ENCODE measurements at regions of chr14 and their contacts with region 1.

Region 1: DNA sequence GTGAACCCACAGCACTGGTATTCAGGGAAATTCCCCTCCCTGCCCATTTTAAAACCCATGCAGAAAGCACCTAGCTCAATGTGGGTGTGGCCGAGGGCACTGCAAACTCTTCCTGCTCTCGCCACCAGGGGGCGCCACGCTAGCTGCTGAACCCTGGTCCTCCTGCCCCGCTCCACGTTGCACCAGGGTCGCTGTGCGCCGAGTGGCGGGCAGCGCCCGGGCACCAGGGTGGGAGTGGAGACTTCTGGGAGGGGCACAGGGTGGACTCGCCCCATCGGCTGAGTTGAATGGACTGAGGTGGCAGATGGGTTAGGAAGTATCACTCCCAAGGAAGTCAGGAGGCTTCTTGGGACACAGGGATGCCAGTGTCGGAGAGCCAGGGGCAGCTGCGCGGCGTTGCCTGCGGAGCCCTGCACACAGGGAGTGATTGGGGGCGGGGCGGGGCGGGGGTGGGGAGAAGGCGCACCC is 48.1 kb upstream of the BCL11B start:
- DNase-seq: peak; percentile 57 to 72 (median 61)
- H3K4me3 ChIP-seq: no peak overlapping the region
- H3K4me3 Mint-ChIP-seq: no peak overlapping the region
- H3K27ac ChIP-seq: no peak overlapping the region
- H3K27ac Mint-ChIP-seq: no peak overlapping the region
- H3K4me1 ChIP-seq: peaks cover 5% of the 10 kb centered on the region
- H3K4me1 Mint-ChIP-seq: peaks cover 0 to 14% (median 3%) of the 10 kb centered on the region in 4 donors
- H3K27me3 ChIP-seq: no peaks in the 10 kb centered on the region
- H3K27me3 Mint-ChIP-seq: peaks cover under 1% of the 10 kb centered on the region in 2 donors

Region 2: DNA sequence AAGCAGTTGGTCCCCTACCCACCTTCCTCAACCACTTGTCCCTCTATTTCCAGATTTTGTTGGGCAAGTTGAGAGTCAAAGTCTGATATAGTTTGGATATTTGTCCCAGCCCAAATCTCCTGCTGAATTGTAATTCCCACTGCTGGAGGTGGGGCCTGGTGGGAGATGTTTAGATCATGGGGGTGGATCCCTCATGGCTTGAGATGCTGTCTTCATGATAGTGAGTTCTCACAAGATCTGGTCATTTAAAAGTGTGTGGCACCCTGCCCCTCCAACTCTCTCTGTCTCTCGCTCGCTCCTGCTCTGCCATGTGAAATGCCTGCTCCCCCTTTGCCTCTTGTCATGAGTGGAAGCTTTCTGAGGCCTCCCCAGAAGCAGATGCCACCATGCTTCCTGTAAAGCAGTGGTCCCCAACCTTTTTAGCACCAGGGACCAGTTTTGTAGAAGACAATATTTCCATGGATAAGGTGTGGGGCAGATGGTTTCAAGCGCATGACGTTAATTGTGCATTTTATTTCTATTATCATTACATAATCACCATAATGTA is 10.8 kb before region 1 on chr14:
- CTCF ChIA-PET with region 1: interaction called, 10 read pairs
- POLR2A ChIA-PET with region 1: no interaction called
- intact Hi-C with region 1: no loop called
- DNase-seq: no peak
- H3K4me3 ChIP-seq: no peak overlapping the region
- H3K4me3 Mint-ChIP-seq: no peak overlapping the region
- H3K27ac ChIP-seq: no peak overlapping the region
- H3K27ac Mint-ChIP-seq: no peak overlapping the region
- H3K4me1 ChIP-seq: no peaks in the 10 kb centered on the region
- H3K4me1 Mint-ChIP-seq: no peaks in the 10 kb centered on the region
- H3K27me3 ChIP-seq: no peaks in the 10 kb centered on the region
- H3K27me3 Mint-ChIP-seq: peaks cover 1% of the 10 kb centered on the region in 2 donors

Region 3: DNA sequence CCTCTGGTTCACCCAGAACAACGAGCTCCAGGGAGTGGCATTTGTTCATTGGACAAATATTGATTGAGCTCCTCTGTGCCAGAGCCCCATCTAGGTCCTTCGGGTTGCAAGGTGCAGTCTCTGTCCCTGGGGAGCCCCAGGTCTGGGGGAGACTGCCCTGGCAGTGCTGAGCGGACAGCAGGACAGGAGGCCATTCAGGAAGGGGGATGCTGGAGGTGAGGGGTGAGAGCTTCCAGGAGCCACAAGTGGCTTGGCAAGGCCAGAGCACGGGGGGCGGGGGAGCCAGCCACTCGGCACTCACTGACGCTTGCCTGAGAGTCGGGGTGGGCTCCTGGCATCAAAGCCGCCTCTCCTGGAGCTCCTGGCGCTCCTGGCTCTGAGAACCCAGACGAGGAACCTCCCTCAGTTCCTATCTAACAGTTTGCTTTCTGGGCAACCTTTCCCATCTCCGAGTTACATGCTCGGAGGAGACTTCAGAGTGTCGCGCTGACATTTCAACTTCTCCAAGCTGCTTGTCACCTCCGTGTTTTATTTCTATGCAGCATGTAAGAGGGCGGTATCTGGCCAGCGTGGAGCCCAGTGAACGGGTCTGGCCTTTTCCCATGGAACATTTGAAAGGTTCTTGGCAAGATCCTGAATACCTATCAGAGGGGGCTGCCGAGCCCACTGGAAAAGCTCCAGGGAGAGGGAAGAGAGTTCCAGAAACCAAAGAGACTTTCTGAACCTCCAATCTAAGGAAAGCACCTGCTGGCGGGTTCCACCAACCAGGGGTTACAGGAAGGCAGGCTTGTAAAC is 13.9 kb after region 1 on chr14:
- CTCF ChIA-PET with region 1: interaction called, 14 read pairs
- POLR2A ChIA-PET with region 1: no interaction called
- intact Hi-C with region 1: no loop called
- DNase-seq: no peak
- H3K4me3 ChIP-seq: no peak overlapping the region
- H3K4me3 Mint-ChIP-seq: no peak overlapping the region
- H3K27ac ChIP-seq: no peak overlapping the region
- H3K27ac Mint-ChIP-seq: no peak overlapping the region
- H3K4me1 ChIP-seq: no peaks in the 10 kb centered on the region
- H3K4me1 Mint-ChIP-seq: no peaks in the 10 kb centered on the region
- H3K27me3 ChIP-seq: no peaks in the 10 kb centered on the region
- H3K27me3 Mint-ChIP-seq: peaks cover 6 to 15% of the 10 kb centered on the region in 2 donors

Region 4: GRCh38 chr14:99393047-99393655 is 73.0 kb after region 1 on chr14:
- CTCF ChIA-PET with region 1: no interaction called
- POLR2A ChIA-PET with region 1: no interaction called
- intact Hi-C with region 1: no loop called
- DNase-seq: peak in 2 of 5 donors; percentile 19 to 22
- H3K4me3 ChIP-seq: no peak overlapping the region
- H3K4me3 Mint-ChIP-seq: no peak overlapping the region
- H3K27ac ChIP-seq: no peak overlapping the region
- H3K27ac Mint-ChIP-seq: peak overlapping the region in 3 of 7 donors; percentile 22 to 30 (median 29)
- H3K4me1 ChIP-seq: peaks cover 5% of the 10 kb centered on the region
- H3K4me1 Mint-ChIP-seq: peaks cover 7 to 26% (median 15%) of the 10 kb centered on the region in 4 donors
- H3K27me3 ChIP-seq: no peaks in the 10 kb centered on the region
- H3K27me3 Mint-ChIP-seq: no peaks in the 10 kb centered on the region

Region 5: DNA sequence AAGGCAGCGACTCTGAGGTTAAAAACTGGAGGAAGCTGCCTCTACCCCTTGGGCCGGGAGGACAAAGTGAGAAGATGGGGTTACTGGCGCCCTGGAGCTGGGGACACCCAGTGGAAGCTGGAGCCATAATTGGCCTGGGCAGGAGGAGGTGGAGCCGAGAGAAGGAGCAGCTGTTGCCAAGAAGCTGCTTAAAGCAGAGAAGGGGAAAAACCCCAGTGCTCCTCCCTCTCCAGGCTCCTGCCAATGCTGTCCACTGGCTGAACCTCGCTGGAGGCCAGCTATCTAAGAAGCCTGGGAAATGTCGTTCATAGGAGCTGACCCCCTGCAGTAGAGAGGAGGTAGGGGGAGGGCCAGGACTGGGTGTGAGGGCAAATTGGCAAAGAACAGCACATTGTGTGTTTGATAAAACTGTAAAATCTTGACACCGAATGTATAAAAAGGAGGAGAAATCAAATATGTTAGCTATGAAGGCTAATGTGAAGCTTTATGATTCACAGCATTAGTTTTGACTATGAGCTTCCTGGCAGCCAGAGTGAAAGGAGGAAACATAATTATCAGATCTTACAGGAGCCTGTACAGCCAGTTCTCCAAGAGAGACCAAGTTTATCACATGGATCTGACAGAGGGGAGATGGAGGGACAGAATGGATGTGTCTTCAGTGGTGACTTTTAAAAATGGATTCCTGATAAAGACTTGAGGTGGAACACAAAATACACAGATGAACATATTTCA is 334.3 kb after region 1 on chr14:
- CTCF ChIA-PET with region 1: no interaction called
- POLR2A ChIA-PET with region 1: no interaction called
- intact Hi-C with region 1: no loop called
- DNase-seq: no peak
- H3K4me3 ChIP-seq: no peak overlapping the region
- H3K4me3 Mint-ChIP-seq: no peak overlapping the region
- H3K27ac ChIP-seq: no peak overlapping the region
- H3K27ac Mint-ChIP-seq: no peak overlapping the region
- H3K4me1 ChIP-seq: no peaks in the 10 kb centered on the region
- H3K4me1 Mint-ChIP-seq: peaks cover 0 to 5% (median 2%) of the 10 kb centered on the region in 4 donors
- H3K27me3 ChIP-seq: peaks cover 11% of the 10 kb centered on the region
- H3K27me3 Mint-ChIP-seq: peaks cover 30 to 41% of the 10 kb centered on the region in 2 donors

Measured in CD4-positive, alpha-beta memory T cell (primary cell).